Dorsolateral prefrontal cortex (tissue), 120 donors: ENCODE measurements at regions of chr10 and their contacts with region 1.

Region 1: GRCh38 chr10:122557516-122557915 is 3.0 kb upstream of the DMBT1 start:
- DNase-seq: no peak
- H3K4me3 ChIP-seq: no peak overlapping the region
- H3K27ac ChIP-seq: no peak overlapping the region
- H3K27me3 ChIP-seq: peaks cover 0 to 14% (median 0%) of the 10 kb centered on the region in 45 donors
- CTCF ChIP-seq: no peak

Region 2: GRCh38 chr10:122213766-122214165 is 343.8 kb before region 1 on chr10:
- intact Hi-C with region 1: no loop called
- DNase-seq: peak in 9 of 10 donors; percentile 58 to 75 (median 70)
- H3K4me3 ChIP-seq: no peak overlapping the region
- H3K27ac ChIP-seq: peak overlapping the region in 3 of 59 donors; percentile 26 to 39 (median 39)
- H3K27me3 ChIP-seq: no peaks in the 10 kb centered on the region
- CTCF ChIP-seq: peak in 54 of 56 donors; percentile 12 to 73 (median 48)

Region 3: GRCh38 chr10:122468926-122469781 is 88.4 kb before region 1 on chr10:
- intact Hi-C with region 1: loop called (anchors 5 to 10 kb)
- DNase-seq: no peak
- H3K4me3 ChIP-seq: peak overlapping the region in 11 of 59 donors; percentile 2 to 27 (median 7)
- H3K27ac ChIP-seq: peak overlapping the region in 58 of 59 donors; percentile 3 to 95 (median 72)
- H3K27me3 ChIP-seq: no peaks in the 10 kb centered on the region
- CTCF ChIP-seq: peak in 26 of 56 donors; percentile 6 to 44 (median 24)

Region 4: GRCh38 chr10:122515588-122516231 is 41.8 kb before region 1 on chr10:
- intact Hi-C with region 1: loop called in 1 of 2 experiments (anchors 5 kb)
- DNase-seq: no peak
- H3K4me3 ChIP-seq: no peak overlapping the region
- H3K27ac ChIP-seq: peak overlapping the region in 58 of 59 donors; percentile 8 to 89 (median 70)
- H3K27me3 ChIP-seq: no peaks in the 10 kb centered on the region
- CTCF ChIP-seq: no peak

Region 5: DNA sequence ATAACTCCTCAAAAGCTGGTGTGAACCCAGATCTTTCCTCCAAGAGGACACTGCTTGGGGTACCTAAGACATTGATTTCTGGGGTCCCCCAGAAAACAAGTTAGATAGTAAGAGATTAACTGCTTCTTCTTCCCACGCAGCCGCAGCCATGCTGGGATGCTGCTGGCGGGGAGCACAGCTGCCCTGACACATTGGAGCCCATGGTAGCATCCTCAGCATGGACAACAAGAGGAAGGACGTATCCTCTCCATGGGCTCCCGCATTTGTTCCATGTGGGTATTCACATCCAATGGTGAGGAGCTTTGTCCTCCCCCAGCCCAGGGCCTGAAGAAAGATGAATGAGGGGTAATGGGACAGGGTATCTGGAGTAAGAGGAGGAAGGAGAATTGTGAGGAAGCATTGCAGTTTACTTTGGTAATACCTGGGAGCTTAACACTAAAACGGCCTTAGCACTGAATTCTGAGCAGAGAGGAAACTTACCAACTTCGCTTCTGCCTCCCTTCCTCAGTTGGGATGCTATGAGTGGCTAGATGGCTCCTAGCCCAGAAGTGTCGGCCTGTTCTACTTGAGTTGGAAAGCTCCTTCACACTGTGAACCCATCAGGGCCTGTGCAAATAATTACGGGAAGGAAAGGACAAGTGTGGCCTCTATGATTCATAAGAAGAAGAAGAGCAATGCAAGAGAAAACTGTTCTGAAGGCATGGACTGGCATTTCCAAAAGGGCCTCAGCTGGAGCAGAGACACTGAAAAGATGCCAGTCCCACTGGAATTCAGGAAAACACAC is 98.2 kb after region 1 on chr10:
- intact Hi-C with region 1: no loop called
- DNase-seq: peak in 1 of 10 donors; percentile 28
- H3K4me3 ChIP-seq: no peak overlapping the region
- H3K27ac ChIP-seq: no peak overlapping the region
- H3K27me3 ChIP-seq: peaks cover 0 to 7% (median 0%) of the 10 kb centered on the region in 45 donors
- CTCF ChIP-seq: no peak